Caco-2 (cell line): ENCODE measurements at regions of chr1 and their contacts with region 1.

Region 1: DNA sequence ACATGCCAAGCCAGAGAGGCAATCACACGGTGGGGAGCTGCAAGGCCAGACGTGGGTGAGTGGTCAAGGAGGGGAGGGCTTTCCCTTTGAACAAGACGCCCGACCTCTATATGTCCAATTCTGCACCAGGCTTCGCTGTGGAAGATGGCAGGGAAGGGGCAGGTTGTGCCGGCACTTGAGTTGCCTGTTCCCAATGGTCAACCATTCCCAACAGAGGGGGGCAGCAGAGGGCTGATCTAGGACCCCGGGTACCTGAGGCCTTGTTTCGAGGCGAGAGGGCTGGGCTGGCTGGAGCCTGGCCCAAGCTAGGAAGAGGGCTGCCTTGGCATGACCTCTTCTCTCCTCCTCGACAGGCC is 64.9 kb downstream of the TMEM53 start:
- DNase-seq: peak; percentile 47 to 64
- H3K4me3 ChIP-seq: no peak overlapping the region
- H3K4me3 Mint-ChIP-seq: no peak overlapping the region
- H3K27ac Mint-ChIP-seq: no peak overlapping the region
- H3K4me1 ChIP-seq: no peaks in the 10 kb centered on the region
- H3K4me1 Mint-ChIP-seq: no peaks in the 10 kb centered on the region
- H3K27me3 ChIP-seq: no peaks in the 10 kb centered on the region
- H3K27me3 Mint-ChIP-seq: peaks cover 5% of the 10 kb centered on the region
- CTCF ChIP-seq: peak in 1 of 2 experiments; percentile 41

Region 2: GRCh38 chr1:44566281-44567046 is 42.9 kb before region 1 on chr1:
- CTCF ChIA-PET with region 1: no interaction called
- POLR2A ChIA-PET with region 1: no interaction called
- intact Hi-C with region 1: no loop called
- DNase-seq: no peak
- H3K4me3 ChIP-seq: no peak overlapping the region
- H3K4me3 Mint-ChIP-seq: no peak overlapping the region
- H3K27ac Mint-ChIP-seq: no peak overlapping the region
- H3K4me1 ChIP-seq: peaks cover 14% of the 10 kb centered on the region
- H3K4me1 Mint-ChIP-seq: peaks cover 10% of the 10 kb centered on the region
- H3K27me3 ChIP-seq: no peaks in the 10 kb centered on the region
- H3K27me3 Mint-ChIP-seq: no peaks in the 10 kb centered on the region
- CTCF ChIP-seq: no peak

Region 3: DNA sequence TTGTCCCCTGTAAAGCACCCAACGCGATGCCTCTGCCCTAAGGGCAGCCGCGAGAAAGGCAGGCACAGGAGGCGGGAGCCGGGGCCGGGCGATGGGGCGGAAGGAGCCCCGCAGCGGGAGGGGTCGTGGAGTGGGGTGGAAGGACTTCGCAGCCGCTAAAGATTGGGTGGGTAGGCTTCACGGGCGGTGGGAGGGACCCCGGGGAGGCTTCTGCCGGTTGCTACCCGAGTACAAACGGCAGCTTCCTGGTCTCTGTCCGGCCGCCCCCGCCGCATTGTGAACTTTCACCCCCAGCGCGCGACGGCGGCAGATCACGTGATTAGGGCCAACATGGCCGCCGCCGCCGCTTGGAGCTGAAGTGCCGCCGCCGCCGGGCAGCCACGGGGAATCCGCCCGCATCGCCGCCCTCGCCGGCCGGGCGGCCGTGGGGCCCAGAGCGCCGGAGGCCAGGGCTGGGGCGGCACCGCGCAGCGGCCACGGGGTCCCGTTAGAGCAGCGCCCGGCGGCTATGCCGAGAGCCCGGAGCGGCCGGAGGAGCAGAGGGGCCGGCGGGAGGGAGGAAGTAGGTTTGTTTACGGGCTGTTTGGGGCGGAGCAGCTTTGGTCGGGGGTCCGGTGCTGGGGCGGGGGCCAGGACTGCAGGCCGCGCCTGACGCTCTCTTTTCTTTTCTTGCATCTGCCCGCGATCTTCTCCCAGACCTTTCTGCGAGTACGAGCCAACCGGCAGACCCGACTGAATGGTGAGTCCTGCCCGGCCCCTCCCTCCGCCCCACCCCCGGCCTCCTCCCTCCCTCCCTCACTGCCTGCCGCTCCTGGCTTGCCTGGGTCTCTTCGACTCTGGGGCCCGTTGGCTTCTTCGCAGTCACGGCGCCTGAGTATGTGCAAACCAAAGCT is 22.5 kb after region 1 on chr1:
- CTCF ChIA-PET with region 1: no interaction called
- POLR2A ChIA-PET with region 1: interaction called, 10 read pairs
- intact Hi-C with region 1: no loop called
- DNase-seq: peak; percentile 87
- H3K4me3 ChIP-seq: peak overlapping the region; percentile 77
- H3K4me3 Mint-ChIP-seq: peak overlapping the region; percentile 86
- H3K27ac Mint-ChIP-seq: peak overlapping the region; percentile 94
- H3K4me1 ChIP-seq: 0 out of 2 replicates have a peak, but pooled peaks cover 4% of the 10 kb centered on the region
- H3K4me1 Mint-ChIP-seq: peaks cover 8% of the 10 kb centered on the region
- H3K27me3 ChIP-seq: no peaks in the 10 kb centered on the region
- H3K27me3 Mint-ChIP-seq: no peaks in the 10 kb centered on the region
- CTCF ChIP-seq: no peak

Region 4: DNA sequence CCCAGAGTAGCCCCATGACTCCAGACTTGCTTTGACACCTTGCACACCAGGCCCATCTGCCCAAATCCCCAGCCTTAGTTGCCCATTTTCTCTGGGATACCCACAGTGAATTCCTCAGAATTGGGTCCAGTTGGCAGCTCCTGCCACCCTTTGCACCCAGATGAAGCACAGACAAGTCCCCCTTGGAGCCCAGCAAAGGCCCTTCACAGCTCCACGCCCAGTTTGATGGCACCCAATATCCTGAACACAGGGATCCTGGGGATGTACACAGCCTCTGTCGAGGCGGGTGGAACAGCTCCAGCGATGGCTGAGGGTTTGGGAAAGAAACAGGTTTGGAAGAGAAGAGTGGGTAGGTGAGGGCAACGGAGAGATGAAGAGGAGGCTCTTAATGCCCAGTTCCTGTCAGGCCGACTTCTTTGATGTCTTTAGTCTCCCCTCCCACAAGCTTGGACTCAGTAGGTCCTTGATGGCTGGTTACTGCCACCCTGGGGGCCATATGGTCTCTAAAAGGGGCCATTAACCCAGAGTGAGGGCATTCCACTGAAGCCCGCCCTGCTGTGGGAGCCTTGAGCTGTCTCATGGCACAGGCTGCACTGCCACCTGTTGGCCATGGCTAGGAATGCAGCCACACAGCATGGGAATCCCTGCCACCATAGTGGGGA is 43.2 kb after region 1 on chr1:
- CTCF ChIA-PET with region 1: interaction called, 4 read pairs
- POLR2A ChIA-PET with region 1: no interaction called
- intact Hi-C with region 1: loop called (anchors 1 kb)
- DNase-seq: peak; percentile 62 to 75
- H3K4me3 ChIP-seq: no peak overlapping the region
- H3K4me3 Mint-ChIP-seq: no peak overlapping the region
- H3K27ac Mint-ChIP-seq: no peak overlapping the region
- H3K4me1 ChIP-seq: no peaks in the 10 kb centered on the region
- H3K4me1 Mint-ChIP-seq: no peaks in the 10 kb centered on the region
- H3K27me3 ChIP-seq: no peaks in the 10 kb centered on the region
- H3K27me3 Mint-ChIP-seq: no peaks in the 10 kb centered on the region
- CTCF ChIP-seq: peak; percentile 80 to 90